H1 (cell line): ENCODE measurements at regions of chr7 and their contacts with region 1.

Region 1: GRCh38 chr7:22860784-22861482 is 38.3 kb upstream of the TOMM7 start:
- DNase-seq: no peak
- H3K4me3 ChIP-seq: no peak overlapping the region
- H3K27ac ChIP-seq: no peak overlapping the region
- H3K4me1 ChIP-seq: peaks cover 0 to 13% (median under 1%) of the 10 kb centered on the region in 4 experiments; a peak in 5 of 7 replicates
- H3K27me3 ChIP-seq: no peaks in the 10 kb centered on the region
- CTCF ChIP-seq: peak; percentile 32 to 62 (median 39); a peak in 3 of 4 replicates
- EP300 ChIP-seq: no peak
- POLR2A ChIP-seq: no peak; a peak in 1 of 3 replicates
- RAD21 ChIP-seq: peak; percentile 43 to 59

Region 2: GRCh38 chr7:22672846-22673652 is 187.9 kb before region 1 on chr7:
- CTCF ChIA-PET with region 1: no interaction called
- POLR2A ChIA-PET with region 1: no interaction called
- DNase-seq: no peak
- H3K4me3 ChIP-seq: no peak overlapping the region
- H3K27ac ChIP-seq: no peak overlapping the region
- H3K4me1 ChIP-seq: peaks cover 5 to 14% (median 10%) of the 10 kb centered on the region in 4 experiments
- H3K27me3 ChIP-seq: no peaks in the 10 kb centered on the region
- CTCF ChIP-seq: no peak
- EP300 ChIP-seq: no peak
- POLR2A ChIP-seq: no peak
- RAD21 ChIP-seq: no peak

Region 3: GRCh38 chr7:22822486-22823141 is 38.3 kb before region 1 on chr7 and contains the start of gene TOMM7:
- CTCF ChIA-PET with region 1: interaction called, 12 read pairs
- POLR2A ChIA-PET with region 1: interaction called, 37 read pairs
- DNase-seq: peak; percentile 84 to 95
- H3K4me3 ChIP-seq: peak within 1 kb of the TSS; percentile 92 to 97 (median 94)
- H3K27ac ChIP-seq: peak within 1 kb of the TSS; percentile 74
- H3K4me1 ChIP-seq: peaks cover 0 to 12% (median 6%) of the 10 kb centered on the region in 4 experiments; a peak in 5 of 7 replicates
- H3K27me3 ChIP-seq: no peaks in the 10 kb centered on the region
- CTCF ChIP-seq: peak in 2 of 3 experiments; percentile 46 to 50; a peak in 2 of 4 replicates
- EP300 ChIP-seq: no peak
- POLR2A ChIP-seq: peak; percentile 69 to 89
- RAD21 ChIP-seq: peak in 1 of 2 experiments; percentile 13; a peak in 3 of 4 replicates
- total RNA-seq, gene TOMM7: 389 and 406 TPM in 2 replicates

Region 4: GRCh38 chr7:22849163-22849562 is 11.8 kb before region 1 on chr7:
- CTCF ChIA-PET with region 1: interaction called, 20 read pairs
- POLR2A ChIA-PET with region 1: interaction called, 13 read pairs
- DNase-seq: no peak
- H3K4me3 ChIP-seq: no peak overlapping the region
- H3K27ac ChIP-seq: no peak overlapping the region
- H3K4me1 ChIP-seq: peaks cover 0 to 9% (median 8%) of the 10 kb centered on the region in 4 experiments; a peak in 5 of 7 replicates
- H3K27me3 ChIP-seq: no peaks in the 10 kb centered on the region; a peak in 1 of 7 replicates
- CTCF ChIP-seq: no peak
- EP300 ChIP-seq: no peak
- POLR2A ChIP-seq: no peak
- RAD21 ChIP-seq: no peak

Region 5: GRCh38 chr7:22872096-22872807 is 11.3 kb after region 1 on chr7:
- CTCF ChIA-PET with region 1: interaction called, 28 read pairs
- POLR2A ChIA-PET with region 1: interaction called, 125 read pairs
- DNase-seq: no peak
- H3K4me3 ChIP-seq: no peak overlapping the region
- H3K27ac ChIP-seq: no peak overlapping the region
- H3K4me1 ChIP-seq: 0 out of 7 replicates have a peak, but pooled peaks cover 0 to 2% (median 0%) of the 10 kb centered on the region in 4 experiments
- H3K27me3 ChIP-seq: no peaks in the 10 kb centered on the region
- CTCF ChIP-seq: no peak
- EP300 ChIP-seq: no peak
- POLR2A ChIP-seq: no peak
- RAD21 ChIP-seq: no peak

Region 6: GRCh38 chr7:22944022-22944421 is 83.1 kb after region 1 on chr7:
- CTCF ChIA-PET with region 1: no interaction called
- POLR2A ChIA-PET with region 1: no interaction called
- DNase-seq: no peak
- H3K4me3 ChIP-seq: no peak overlapping the region
- H3K27ac ChIP-seq: no peak overlapping the region
- H3K4me1 ChIP-seq: peaks cover 0 to 8% (median 2%) of the 10 kb centered on the region in 4 experiments; a peak in 3 of 7 replicates
- H3K27me3 ChIP-seq: no peaks in the 10 kb centered on the region
- CTCF ChIP-seq: no peak
- EP300 ChIP-seq: no peak
- POLR2A ChIP-seq: no peak
- RAD21 ChIP-seq: no peak